Heart right ventricle (tissue), 16 donors: ENCODE measurements at regions of chr15 and their contacts with region 1.

Region 1: GRCh38 chr15:56491110-56491722 is 26.3 kb upstream of the MNS1 start:
- DNase-seq: peak; percentile 26 to 27
- ATAC-seq: peak in 3 of 8 donors; percentile 56 to 82 (median 69)
- H3K4me3 ChIP-seq: no peak overlapping the region
- H3K27ac ChIP-seq: no peak overlapping the region
- H3K4me1 ChIP-seq: no peaks in the 10 kb centered on the region
- H3K27me3 ChIP-seq: peaks cover 0 to 9% (median 0%) of the 10 kb centered on the region in 7 donors
- CTCF ChIP-seq: peak; percentile 51 to 91 (median 80)

Region 2: GRCh38 chr15:56325186-56325585 is 166.0 kb before region 1 on chr15:
- intact Hi-C with region 1: no loop called
- DNase-seq: no peak
- ATAC-seq: no peak
- H3K4me3 ChIP-seq: no peak overlapping the region
- H3K27ac ChIP-seq: no peak overlapping the region
- H3K4me1 ChIP-seq: no peaks in the 10 kb centered on the region
- H3K27me3 ChIP-seq: no peaks in the 10 kb centered on the region
- CTCF ChIP-seq: no peak

Region 3: DNA sequence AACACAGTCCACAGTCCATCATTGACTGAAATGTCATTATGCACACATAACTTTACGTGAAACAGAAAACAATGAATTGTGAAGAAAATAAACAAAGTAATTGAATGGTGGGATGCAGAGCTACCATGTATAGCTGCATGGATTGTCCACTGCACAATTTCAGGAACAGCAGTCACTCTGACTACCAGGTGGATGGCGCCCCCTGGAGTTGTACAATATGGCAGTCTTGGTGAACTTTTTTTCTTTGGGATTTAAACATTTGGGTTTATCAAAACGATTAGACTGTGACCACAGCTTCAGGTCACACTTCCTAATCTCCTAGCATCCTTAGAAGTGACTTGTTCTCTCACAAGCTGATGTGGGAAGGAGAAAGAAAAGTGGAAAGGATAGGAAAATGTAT is 378.4 kb after region 1 on chr15:
- intact Hi-C with region 1: loop called in 8 of 10 experiments (anchors 2 to 10 kb)
- DNase-seq: peak; percentile 24 to 36
- ATAC-seq: no peak
- H3K4me3 ChIP-seq: no peak overlapping the region
- H3K27ac ChIP-seq: no peak overlapping the region
- H3K4me1 ChIP-seq: peaks cover 0 to 9% (median 0%) of the 10 kb centered on the region in 9 donors
- H3K27me3 ChIP-seq: no peaks in the 10 kb centered on the region
- CTCF ChIP-seq: peak in 8 of 9 donors; percentile 25 to 69 (median 58)

Region 4: DNA sequence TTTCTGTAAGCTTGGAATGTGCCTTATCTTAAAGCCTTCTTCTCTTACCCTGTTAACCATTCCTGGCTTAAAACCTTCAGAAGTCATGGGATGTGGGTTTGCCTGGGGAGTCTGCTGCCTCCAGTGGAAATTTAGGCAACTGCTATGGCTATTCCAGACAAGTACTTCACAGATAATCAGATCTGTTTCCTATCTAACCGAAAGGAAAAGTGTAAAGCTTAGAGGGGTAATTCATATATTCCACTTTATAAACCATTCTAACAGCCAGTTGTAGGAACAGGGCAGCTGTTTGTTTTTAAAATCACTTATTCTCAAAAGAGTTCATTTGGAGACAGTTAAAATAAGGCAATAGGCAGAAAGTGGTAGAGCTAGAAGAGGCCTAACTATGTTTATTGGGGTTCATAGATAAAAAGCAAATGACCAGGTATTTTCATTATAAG is 647.2 kb after region 1 on chr15:
- intact Hi-C with region 1: loop called in 2 of 10 experiments (anchors 10 kb)
- DNase-seq: peak in 1 of 2 donors; percentile 42
- ATAC-seq: peak; percentile 25 to 81 (median 71)
- H3K4me3 ChIP-seq: no peak overlapping the region
- H3K27ac ChIP-seq: no peak overlapping the region
- H3K4me1 ChIP-seq: peaks cover 0 to 48% (median 42%) of the 10 kb centered on the region in 9 donors
- H3K27me3 ChIP-seq: no peaks in the 10 kb centered on the region
- CTCF ChIP-seq: peak; percentile 70 to 88 (median 78)

Region 5: DNA sequence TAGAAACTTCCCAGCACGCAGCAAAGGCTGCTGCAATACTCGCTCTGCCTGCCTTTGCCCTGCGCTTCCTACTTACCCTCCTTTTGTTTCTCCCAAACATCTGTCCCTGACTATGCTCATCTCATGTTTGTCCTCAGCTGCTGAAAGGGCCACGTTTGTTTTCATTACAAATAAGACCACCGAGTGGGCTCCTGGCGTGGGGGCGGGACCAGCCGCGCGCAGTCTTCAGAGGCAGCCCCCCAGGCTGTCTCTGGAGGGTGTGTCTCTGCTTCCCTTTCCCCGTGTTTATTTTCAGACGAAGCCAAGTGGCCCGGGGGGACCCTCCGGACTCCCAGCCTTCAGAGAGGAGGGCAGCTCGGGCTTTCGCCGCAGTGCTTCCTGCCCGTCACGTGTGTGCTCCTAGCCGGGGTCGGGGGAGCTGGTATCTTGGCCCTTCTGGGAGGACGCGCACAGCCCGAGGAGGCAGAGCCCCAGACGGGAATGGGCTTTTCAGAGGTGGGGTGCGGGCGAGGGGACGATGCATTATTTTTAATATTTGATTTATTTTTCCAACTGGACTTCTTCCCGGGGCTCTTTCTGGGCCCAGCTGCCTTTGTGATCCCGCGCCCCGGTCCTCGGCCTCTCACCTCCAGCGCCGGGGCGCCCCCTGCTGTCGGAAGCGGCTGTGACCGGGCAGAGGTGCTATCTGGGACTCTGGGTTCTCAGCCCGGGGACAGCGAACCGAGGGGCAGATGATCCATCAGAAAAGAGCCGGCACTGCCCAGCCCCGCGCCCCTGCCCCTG is 815.1 kb after region 1 on chr15:
- intact Hi-C with region 1: loop called in 8 of 10 experiments (anchors 5 to 10 kb)
- DNase-seq: peak; percentile 87 to 92
- ATAC-seq: peak; percentile 88 to 95 (median 91)
- H3K4me3 ChIP-seq: peak overlapping the region; percentile 19 to 84 (median 58)
- H3K27ac ChIP-seq: peak overlapping the region in 6 of 10 donors; percentile 30 to 54 (median 34)
- H3K4me1 ChIP-seq: peaks cover 0 to 18% (median 12%) of the 10 kb centered on the region in 9 donors
- H3K27me3 ChIP-seq: no peaks in the 10 kb centered on the region
- CTCF ChIP-seq: peak; percentile 82 to 96 (median 91)

Region 6: GRCh38 chr15:57527382-57528091 is 1036.3 kb after region 1 on chr15:
- intact Hi-C with region 1: loop called in 6 of 10 experiments (anchors 5 to 10 kb)
- DNase-seq: peak in 1 of 2 donors; percentile 58
- ATAC-seq: peak; percentile 62 to 78 (median 71)
- H3K4me3 ChIP-seq: no peak overlapping the region
- H3K27ac ChIP-seq: no peak overlapping the region
- H3K4me1 ChIP-seq: peaks cover 0 to 18% (median 3%) of the 10 kb centered on the region in 9 donors
- H3K27me3 ChIP-seq: no peaks in the 10 kb centered on the region
- CTCF ChIP-seq: peak; percentile 49 to 81 (median 66)